Natural killer cell (primary cell): ENCODE measurements at regions of chr5 and their contacts with region 1.

Region 1: DNA sequence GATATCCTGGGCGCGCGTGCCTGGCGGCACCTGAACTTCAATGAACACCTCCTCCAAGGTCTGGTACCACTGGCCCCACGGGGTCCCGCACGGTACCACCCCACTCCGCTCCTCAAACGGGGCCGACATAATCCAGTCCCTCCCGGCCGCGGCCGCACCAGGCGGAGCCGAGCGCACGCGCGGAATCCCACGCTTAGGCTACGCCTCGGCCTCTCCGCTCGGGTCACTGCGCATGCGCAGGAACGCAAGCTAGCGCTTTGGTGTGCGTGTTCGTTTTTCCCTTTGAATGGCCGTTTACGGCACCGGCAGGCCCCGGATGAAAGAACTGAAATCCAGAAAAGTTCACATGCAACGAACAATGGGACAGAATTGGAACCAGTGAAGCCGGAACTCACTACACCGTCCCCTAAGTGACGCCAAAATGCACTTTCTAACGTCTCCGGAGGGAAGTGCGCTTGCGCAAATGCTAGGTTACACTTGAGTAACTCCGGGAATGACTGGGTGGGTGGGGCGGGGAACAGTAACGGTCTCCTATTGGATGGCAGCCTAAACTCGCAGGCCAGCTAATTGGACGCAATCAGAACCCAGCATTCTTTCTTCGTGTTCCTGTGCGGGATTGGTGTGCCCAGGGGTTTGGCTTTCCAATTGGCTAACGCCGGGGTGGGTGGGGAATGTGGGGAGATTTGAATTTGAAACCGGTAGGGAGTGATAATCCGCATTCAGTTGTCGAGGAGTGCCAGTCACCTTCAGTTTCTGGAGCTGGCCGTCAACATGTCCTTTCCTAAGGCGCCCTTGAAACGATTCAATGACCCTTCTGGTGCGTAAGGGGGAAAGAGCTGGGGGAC is at the starts of genes HMMR and NUDCD2:
- DNase-seq: peak; percentile 97 to 98
- ATAC-seq: peak; percentile 76 to 90 (median 82)
- H3K4me3 ChIP-seq: peak within 1 kb of the TSS; percentile 86
- H3K4me3 Mint-ChIP-seq: peak within 1 kb of the TSS; percentile 98
- H3K27ac ChIP-seq: peak within 1 kb of the TSS; percentile 95
- H3K27ac Mint-ChIP-seq: peak within 1 kb of the TSS; percentile 98
- H3K4me1 ChIP-seq: peaks cover 20% of the 10 kb centered on the region
- H3K4me1 Mint-ChIP-seq: peaks cover 28 to 40% of the 10 kb centered on the region in 2 donors
- H3K27me3 ChIP-seq: no peaks in the 10 kb centered on the region
- H3K27me3 Mint-ChIP-seq: no peaks in the 10 kb centered on the region
- CTCF ChIP-seq: no peak
- total RNA-seq, gene HMMR: 0.42 to 0.70 (median 0.63) TPM
- total RNA-seq, gene NUDCD2: 13.2 to 24.7 (median 21.7) TPM

Region 2: DNA sequence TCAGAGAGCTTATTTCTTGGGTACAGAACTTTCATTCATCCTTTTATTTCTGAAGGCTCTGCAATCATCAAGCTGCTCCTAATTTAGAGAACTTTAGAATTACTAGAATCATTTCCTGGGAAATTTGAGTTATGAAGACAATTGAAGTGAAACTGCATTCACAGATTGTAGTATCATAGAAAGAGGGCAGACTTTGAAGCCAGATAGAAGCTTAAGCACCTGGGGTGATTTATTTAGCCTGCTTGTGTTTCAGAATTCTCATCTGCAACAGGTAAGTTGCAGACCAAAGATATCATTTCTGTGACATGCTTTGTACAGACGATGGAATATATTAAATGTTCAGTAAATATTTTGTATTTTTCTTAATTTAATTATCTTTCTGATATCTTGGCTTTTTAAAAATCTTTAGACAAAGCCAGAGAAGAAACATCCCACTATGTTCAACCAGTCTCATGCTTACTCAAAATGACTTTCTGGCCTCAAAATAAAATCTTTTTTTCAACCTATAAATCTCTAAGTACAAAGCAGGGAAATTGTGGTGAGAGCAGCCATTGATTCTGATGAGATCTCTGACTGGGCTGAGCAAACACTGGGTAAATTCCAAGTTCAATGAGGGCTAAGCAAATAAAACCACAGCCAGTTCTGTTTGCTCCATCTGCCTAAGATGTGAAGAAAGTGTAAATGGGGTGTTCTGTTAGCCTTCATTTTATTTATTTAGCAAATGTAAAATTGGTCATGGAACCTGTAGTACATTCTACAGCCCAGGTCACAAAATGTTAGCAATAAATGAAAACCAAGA is 287.4 kb before region 1 on chr5:
- intact Hi-C with region 1: no loop called
- DNase-seq: no peak
- ATAC-seq: no peak
- H3K4me3 ChIP-seq: no peak overlapping the region
- H3K4me3 Mint-ChIP-seq: no peak overlapping the region
- H3K27ac ChIP-seq: no peak overlapping the region
- H3K27ac Mint-ChIP-seq: no peak overlapping the region
- H3K4me1 ChIP-seq: no peaks in the 10 kb centered on the region
- H3K4me1 Mint-ChIP-seq: no peaks in the 10 kb centered on the region
- H3K27me3 ChIP-seq: no peaks in the 10 kb centered on the region
- H3K27me3 Mint-ChIP-seq: no peaks in the 10 kb centered on the region
- CTCF ChIP-seq: no peak

Region 3: DNA sequence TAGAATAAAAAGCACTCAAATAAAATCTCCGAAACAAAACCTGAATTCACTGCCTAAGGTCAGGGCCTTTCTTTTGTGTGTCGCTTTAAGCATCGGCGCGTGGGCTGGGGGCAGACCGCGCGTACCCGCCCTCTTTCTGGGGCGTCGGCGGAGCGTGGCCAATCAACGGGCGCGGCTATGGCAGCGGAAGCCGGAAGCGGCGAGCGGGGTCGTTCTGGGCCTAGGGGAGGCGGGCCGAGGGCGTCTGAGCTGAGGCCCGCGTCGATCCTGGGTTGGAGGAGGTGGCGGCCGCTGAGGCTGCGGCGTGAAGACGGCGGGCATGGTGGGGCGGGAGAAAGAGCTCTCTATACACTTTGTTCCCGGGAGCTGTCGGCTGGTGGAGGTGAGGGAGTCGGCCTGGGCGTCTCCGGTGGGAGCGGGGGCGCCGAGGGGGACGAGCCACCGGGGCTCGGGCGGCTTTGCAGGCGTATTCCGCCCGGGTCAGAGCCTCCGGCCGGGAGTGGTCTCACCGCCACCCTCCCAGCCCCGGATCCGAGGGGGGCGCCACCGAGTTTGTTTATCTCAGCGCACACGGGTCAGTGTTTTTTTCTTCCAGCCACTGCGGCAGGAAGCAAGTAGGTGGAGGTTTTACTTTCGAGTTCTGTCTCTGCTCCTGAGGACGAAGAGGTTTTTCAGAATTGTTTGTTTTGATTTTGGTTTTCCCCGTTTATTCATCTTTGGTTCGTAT is 45.4 kb after region 1 on chr5 and contains the start of gene MAT2B:
- intact Hi-C with region 1: loop called (anchors 1 kb)
- DNase-seq: peak; percentile 95 to 98
- ATAC-seq: peak; percentile 81 to 96 (median 87)
- H3K4me3 ChIP-seq: peak within 1 kb of the TSS; percentile 92
- H3K4me3 Mint-ChIP-seq: peak within 1 kb of the TSS; percentile 98
- H3K27ac ChIP-seq: peak within 1 kb of the TSS; percentile 99
- H3K27ac Mint-ChIP-seq: peak within 1 kb of the TSS; percentile 99 to 100
- H3K4me1 ChIP-seq: peaks cover 24% of the 10 kb centered on the region
- H3K4me1 Mint-ChIP-seq: peaks cover 70 to 74% of the 10 kb centered on the region in 2 donors
- H3K27me3 ChIP-seq: no peaks in the 10 kb centered on the region
- H3K27me3 Mint-ChIP-seq: no peaks in the 10 kb centered on the region
- CTCF ChIP-seq: peak; percentile 48
- total RNA-seq, gene MAT2B: 68.5 to 99.0 (median 80.7) TPM